Lower lobe of right lung (tissue), 2 donors: ENCODE measurements at regions of chr10 and their contacts with region 1.

Region 1: GRCh38 chr10:23174977-23175512 is 17.1 kb upstream of the PTF1A start:
- DNase-seq: no peak
- ATAC-seq: no peak
- H3K4me3 ChIP-seq: no peak overlapping the region
- H3K27ac ChIP-seq: no peak overlapping the region
- H3K4me1 ChIP-seq: no peaks in the 10 kb centered on the region
- H3K27me3 ChIP-seq: peaks cover 71% of the 10 kb centered on the region
- CTCF ChIP-seq: no peak

Region 2: GRCh38 chr10:22183771-22184461 is 991.1 kb before region 1 on chr10:
- intact Hi-C with region 1: no loop called
- DNase-seq: no peak
- ATAC-seq: no peak
- H3K4me3 ChIP-seq: no peak overlapping the region
- H3K27ac ChIP-seq: no peak overlapping the region
- H3K4me1 ChIP-seq: no peaks in the 10 kb centered on the region
- H3K27me3 ChIP-seq: peaks cover 3% of the 10 kb centered on the region
- CTCF ChIP-seq: no peak

Region 3: GRCh38 chr10:23099816-23100215 is 75.2 kb before region 1 on chr10:
- intact Hi-C with region 1: no loop called
- DNase-seq: no peak
- ATAC-seq: no peak
- H3K4me3 ChIP-seq: no peak overlapping the region
- H3K27ac ChIP-seq: no peak overlapping the region
- H3K4me1 ChIP-seq: peaks cover 14% of the 10 kb centered on the region
- H3K27me3 ChIP-seq: no peaks in the 10 kb centered on the region
- CTCF ChIP-seq: no peak

Region 4: DNA sequence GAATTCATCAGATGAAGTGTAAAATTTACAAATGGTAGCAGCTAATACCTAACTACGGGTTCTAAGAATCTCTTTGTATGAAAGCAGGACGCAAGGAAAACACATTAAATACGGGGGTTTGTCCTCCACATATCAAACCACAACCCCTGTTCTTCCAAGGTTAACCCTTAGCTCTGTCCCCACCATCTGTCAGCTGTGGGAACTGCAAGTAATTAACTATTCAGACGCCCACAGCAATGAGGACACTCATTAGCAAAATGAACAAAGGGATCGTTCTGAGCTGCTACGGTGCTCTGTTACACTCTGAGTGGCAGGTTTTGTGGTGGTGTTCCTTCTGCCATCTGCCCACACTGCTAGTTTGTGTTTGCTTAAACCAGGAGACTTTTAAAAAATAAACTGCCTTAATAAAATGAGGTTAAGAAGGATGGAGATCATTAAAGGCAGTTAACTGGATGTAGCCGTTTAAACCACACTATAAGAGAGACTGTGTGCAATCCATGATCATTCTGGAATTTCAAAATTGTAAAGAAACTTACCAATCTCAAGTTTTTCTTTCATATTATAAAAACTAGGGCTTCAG is 118.2 kb after region 1 on chr10:
- intact Hi-C with region 1: loop called (anchors 5 kb)
- DNase-seq: no peak
- ATAC-seq: no peak
- H3K4me3 ChIP-seq: no peak overlapping the region
- H3K27ac ChIP-seq: no peak overlapping the region
- H3K4me1 ChIP-seq: no peaks in the 10 kb centered on the region
- H3K27me3 ChIP-seq: peaks cover 12% of the 10 kb centered on the region
- CTCF ChIP-seq: peak; percentile 34